ENCODE measurements at regions of chr10 and their contacts with region 1.

Region 1: GRCh38 chr10:118568327-118568848 is 27.1 kb downstream of the PRLHR start:
- DNase-seq: peak; percentile 47 to 58 (median 48)
- ATAC-seq: peak; percentile 76
- H3K4me3 ChIP-seq: no peak overlapping the region
- H3K27ac ChIP-seq: no peak overlapping the region
- H3K4me1 ChIP-seq: no peaks in the 10 kb centered on the region; a peak in 1 of 5 replicates
- H3K27me3 ChIP-seq: peaks cover 0 to 23% of the 10 kb centered on the region in 2 experiments; a peak in 3 of 5 replicates
- CTCF ChIP-seq: peak; percentile 50 to 78 (median 62); a peak in 5 of 6 replicates
- EP300 ChIP-seq: no peak
- POLR2A ChIP-seq: no peak
- RAD21 ChIP-seq: peak; percentile 72 to 73

Region 2: DNA sequence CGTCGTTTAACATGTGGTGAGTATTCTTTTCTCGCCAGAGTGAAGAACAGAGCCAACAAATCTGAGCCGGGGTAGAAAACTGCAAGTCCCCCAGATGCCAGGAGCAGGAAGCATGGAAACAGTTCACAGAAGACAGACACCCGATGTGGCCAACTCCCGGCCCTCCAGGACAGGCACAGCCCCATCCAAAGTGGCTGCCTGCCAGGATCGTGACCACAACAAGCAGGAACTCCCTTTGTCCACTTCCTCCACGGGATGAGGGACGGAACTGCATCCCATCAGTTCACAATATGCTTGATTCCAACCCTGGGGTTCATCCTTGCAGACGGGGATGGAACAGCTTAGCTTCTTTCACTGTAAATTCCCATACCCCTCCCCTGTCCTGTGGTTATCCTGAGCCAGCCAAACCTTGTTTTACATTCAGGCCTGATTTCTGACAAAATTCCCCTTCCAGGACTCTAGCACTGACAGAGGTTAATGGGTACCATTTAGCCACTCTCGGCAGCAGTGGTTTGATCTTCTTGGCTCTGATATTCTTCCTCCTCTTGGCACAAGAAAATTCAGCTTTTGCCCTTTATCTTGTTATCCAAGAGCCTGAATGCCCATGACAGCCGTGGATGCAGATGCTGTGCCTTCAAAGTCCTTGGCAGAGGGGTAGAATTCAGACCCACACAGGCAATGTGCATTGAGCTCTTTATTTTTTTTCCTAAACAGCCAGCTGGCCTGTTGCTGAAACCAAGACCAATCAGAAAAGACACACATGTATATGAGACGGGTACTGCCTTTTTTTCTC is 120.7 kb before region 1 on chr10:
- CTCF ChIA-PET with region 1: no interaction called
- POLR2A ChIA-PET with region 1: no interaction called
- in situ Hi-C with region 1: no loop called
- intact Hi-C with region 1: no loop called
- DNase-seq: no peak
- ATAC-seq: no peak
- H3K4me3 ChIP-seq: no peak overlapping the region
- H3K27ac ChIP-seq: no peak overlapping the region
- H3K4me1 ChIP-seq: no peaks in the 10 kb centered on the region
- H3K27me3 ChIP-seq: peaks cover 0 to 14% of the 10 kb centered on the region in 2 experiments; a peak in 2 of 5 replicates
- CTCF ChIP-seq: no peak
- EP300 ChIP-seq: no peak
- POLR2A ChIP-seq: no peak
- RAD21 ChIP-seq: no peak

Region 3: DNA sequence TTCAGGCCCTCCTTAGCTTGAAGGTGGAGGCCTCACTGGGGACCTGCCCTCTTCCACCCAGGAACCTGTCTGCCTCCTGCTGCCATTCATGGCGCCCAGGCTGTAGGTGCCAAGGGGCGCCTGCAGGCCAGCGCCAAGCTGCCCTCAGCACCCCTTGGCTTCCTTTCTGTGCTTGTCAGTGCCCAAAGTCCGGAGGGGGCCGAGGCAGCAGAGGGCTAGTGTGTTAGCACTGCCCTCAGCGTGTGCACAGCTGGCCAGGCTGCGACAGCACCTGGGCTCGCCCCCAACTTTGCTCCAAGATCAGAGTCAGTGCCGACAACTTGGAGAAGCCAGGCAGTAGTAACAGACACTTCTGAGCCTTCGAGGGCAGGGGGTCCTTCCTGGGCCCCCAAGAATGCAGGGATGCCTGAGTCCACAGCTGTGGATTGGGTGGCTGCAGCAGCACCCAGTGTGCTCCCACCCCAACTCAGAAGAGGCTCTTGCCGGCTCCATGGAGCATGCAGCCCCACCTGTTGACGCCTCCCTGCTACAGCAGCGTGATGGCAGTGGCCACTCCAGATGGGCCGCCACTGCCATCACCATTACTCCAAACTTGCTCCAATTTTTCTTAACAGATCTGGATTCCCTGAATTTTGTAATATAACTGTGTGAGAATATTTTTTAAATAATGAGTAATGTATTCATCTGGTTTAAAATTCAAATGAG is 144.7 kb after region 1 on chr10:
- CTCF ChIA-PET with region 1: interaction called, 4 read pairs
- POLR2A ChIA-PET with region 1: no interaction called
- in situ Hi-C with region 1: loop called (anchors 5 kb)
- intact Hi-C with region 1: no loop called
- DNase-seq: peak in 2 of 4 experiments; percentile 7 to 11
- ATAC-seq: peak; percentile 80
- H3K4me3 ChIP-seq: no peak overlapping the region
- H3K27ac ChIP-seq: no peak overlapping the region
- H3K4me1 ChIP-seq: peaks cover 0 to 6% of the 10 kb centered on the region in 2 experiments; a peak in 1 of 5 replicates
- H3K27me3 ChIP-seq: no peaks in the 10 kb centered on the region
- CTCF ChIP-seq: peak; percentile 34 to 48 (median 44); a peak in 4 of 6 replicates
- EP300 ChIP-seq: no peak
- POLR2A ChIP-seq: no peak
- RAD21 ChIP-seq: peak in 1 of 2 experiments; percentile 26; a peak in 1 of 4 replicates

Region 4: GRCh38 chr10:118720685-118721538 is 152.5 kb after region 1 on chr10:
- CTCF ChIA-PET with region 1: interaction called, 11 read pairs
- POLR2A ChIA-PET with region 1: no interaction called
- in situ Hi-C with region 1: no loop called
- intact Hi-C with region 1: loop called (anchors 1 kb)
- DNase-seq: peak; percentile 14 to 57 (median 30)
- ATAC-seq: peak; percentile 59; the same call in 1 of the 3 replicates
- H3K4me3 ChIP-seq: no peak overlapping the region
- H3K27ac ChIP-seq: no peak overlapping the region
- H3K4me1 ChIP-seq: no peaks in the 10 kb centered on the region
- H3K27me3 ChIP-seq: no peaks in the 10 kb centered on the region
- CTCF ChIP-seq: peak; percentile 38 to 75 (median 41); a peak in 4 of 6 replicates
- EP300 ChIP-seq: no peak
- POLR2A ChIP-seq: no peak
- RAD21 ChIP-seq: peak; percentile 57 to 63

Region 5: GRCh38 chr10:118800920-118801319 is 232.5 kb after region 1 on chr10:
- CTCF ChIA-PET with region 1: interaction called, 44 read pairs
- POLR2A ChIA-PET with region 1: no interaction called
- in situ Hi-C with region 1: loop called (anchors 5 kb)
- intact Hi-C with region 1: loop called (anchors 1 kb)
- DNase-seq: peak in 3 of 4 experiments; percentile 16 to 21 (median 18)
- ATAC-seq: peak; percentile 72
- H3K4me3 ChIP-seq: no peak overlapping the region
- H3K27ac ChIP-seq: no peak overlapping the region
- H3K4me1 ChIP-seq: no peaks in the 10 kb centered on the region; a peak in 1 of 5 replicates
- H3K27me3 ChIP-seq: peaks cover 2 to 11% of the 10 kb centered on the region in 2 experiments; a peak in 4 of 5 replicates
- CTCF ChIP-seq: peak; percentile 46 to 72 (median 48); a peak in 5 of 6 replicates
- EP300 ChIP-seq: no peak
- POLR2A ChIP-seq: no peak
- RAD21 ChIP-seq: peak; percentile 80 to 82

Region 6: GRCh38 chr10:118808601-118809356 is 240.4 kb after region 1 on chr10:
- CTCF ChIA-PET with region 1: no interaction called
- POLR2A ChIA-PET with region 1: no interaction called
- in situ Hi-C with region 1: loop called (anchors 5 kb)
- intact Hi-C with region 1: no loop called
- DNase-seq: no peak
- ATAC-seq: no peak
- H3K4me3 ChIP-seq: no peak overlapping the region
- H3K27ac ChIP-seq: no peak overlapping the region
- H3K4me1 ChIP-seq: no peaks in the 10 kb centered on the region; a peak in 2 of 5 replicates
- H3K27me3 ChIP-seq: peaks cover 0 to 45% of the 10 kb centered on the region in 2 experiments; a peak in 3 of 5 replicates
- CTCF ChIP-seq: no peak
- EP300 ChIP-seq: no peak
- POLR2A ChIP-seq: no peak
- RAD21 ChIP-seq: no peak

Region 7: GRCh38 chr10:118850418-118851061 is 282.2 kb after region 1 on chr10:
- CTCF ChIA-PET with region 1: interaction called, 7 read pairs
- POLR2A ChIA-PET with region 1: interaction called, 3 read pairs
- in situ Hi-C with region 1: no loop called
- intact Hi-C with region 1: loop called (anchors 5 kb)
- DNase-seq: peak; percentile 32 to 68 (median 44)
- ATAC-seq: peak; percentile 82
- H3K4me3 ChIP-seq: no peak overlapping the region
- H3K27ac ChIP-seq: no peak overlapping the region
- H3K4me1 ChIP-seq: no peaks in the 10 kb centered on the region
- H3K27me3 ChIP-seq: peaks cover 0 to 6% of the 10 kb centered on the region in 2 experiments; a peak in 2 of 5 replicates
- CTCF ChIP-seq: peak; percentile 68 to 76 (median 70)
- EP300 ChIP-seq: no peak
- POLR2A ChIP-seq: no peak
- RAD21 ChIP-seq: peak in 1 of 2 experiments; percentile 67; a peak in 3 of 4 replicates